ENCODE measurements at regions of chr12 and their contacts with region 1.

Region 1: GRCh38 chr12:100554608-100555077 is 18.8 kb upstream of the GAS2L3 start:
- DNase-seq: peak; percentile 70
- H3K4me3 ChIP-seq: no peak overlapping the region
- H3K27ac ChIP-seq: no peak overlapping the region
- H3K4me1 ChIP-seq: no peaks in the 10 kb centered on the region
- H3K27me3 ChIP-seq: no peaks in the 10 kb centered on the region
- CTCF ChIP-seq: peak; percentile 82 to 94

Region 2: GRCh38 chr12:100154474-100155247 is 400.0 kb before region 1 on chr12:
- CTCF ChIA-PET with region 1: no interaction called
- dilution Hi-C with region 1: no loop called
- in situ Hi-C with region 1: no loop called
- intact Hi-C with region 1: loop called (anchors 1 kb)
- DNase-seq: peak; percentile 37
- H3K4me3 ChIP-seq: no peak overlapping the region
- H3K27ac ChIP-seq: no peak overlapping the region
- H3K4me1 ChIP-seq: no peaks in the 10 kb centered on the region
- H3K27me3 ChIP-seq: no peaks in the 10 kb centered on the region
- CTCF ChIP-seq: peak; percentile 77 to 86

Region 3: GRCh38 chr12:100391856-100392255 is 162.8 kb before region 1 on chr12:
- CTCF ChIA-PET with region 1: no interaction called
- dilution Hi-C with region 1: no loop called
- in situ Hi-C with region 1: no loop called
- intact Hi-C with region 1: loop called (anchors 1 kb)
- DNase-seq: no peak
- H3K4me3 ChIP-seq: no peak overlapping the region
- H3K27ac ChIP-seq: no peak overlapping the region
- H3K4me1 ChIP-seq: no peaks in the 10 kb centered on the region
- H3K27me3 ChIP-seq: no peaks in the 10 kb centered on the region
- CTCF ChIP-seq: peak in 1 of 2 donors; percentile 42

Region 4: DNA sequence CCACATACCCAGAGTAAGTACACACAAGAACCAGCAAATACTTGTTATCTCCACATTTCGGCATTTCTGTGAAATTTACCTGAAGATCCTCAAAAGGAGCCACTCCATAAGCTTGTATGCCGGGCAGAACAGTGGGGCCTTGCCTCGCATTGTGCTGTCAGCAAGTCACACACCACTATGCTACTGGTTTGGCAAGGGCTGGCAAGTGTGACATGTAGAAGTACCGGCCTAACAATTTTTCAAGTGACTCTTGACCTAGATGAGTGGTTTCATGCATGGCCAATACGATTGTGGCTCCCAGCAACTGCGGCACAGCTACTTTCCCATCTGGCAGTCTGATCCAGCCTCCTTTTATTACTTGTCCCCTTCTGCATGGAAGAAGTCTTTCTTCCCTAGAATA is 88.6 kb after region 1 on chr12:
- CTCF ChIA-PET with region 1: no interaction called
- dilution Hi-C with region 1: no loop called
- in situ Hi-C with region 1: no loop called
- intact Hi-C with region 1: no loop called
- DNase-seq: no peak
- H3K4me3 ChIP-seq: no peak overlapping the region
- H3K27ac ChIP-seq: no peak overlapping the region
- H3K4me1 ChIP-seq: no peaks in the 10 kb centered on the region
- H3K27me3 ChIP-seq: no peaks in the 10 kb centered on the region
- CTCF ChIP-seq: no peak

Measured in mammary epithelial cell (primary cell).